ENCODE measurements at regions of chr19 and their contacts with region 1.

Region 1: GRCh38 chr19:5690125-5690954 is at the start of gene RPL36:
- DNase-seq: peak; percentile 99
- ATAC-seq: peak; percentile 19
- H3K4me3 Mint-ChIP-seq: peak within 1 kb of the TSS; percentile 99
- H3K27ac Mint-ChIP-seq: peak within 1 kb of the TSS; percentile 95
- H3K4me1 Mint-ChIP-seq: peaks cover 15% of the 10 kb centered on the region
- H3K27me3 Mint-ChIP-seq: peaks cover 5% of the 10 kb centered on the region; the same call in 1 of the 2 replicates
- CTCF ChIP-seq: peak; percentile 84
- total RNA-seq, gene RPL36: 1,080 to 1,240 TPM (median 1,178 TPM) in 3 replicates

Region 2: GRCh38 chr19:5622463-5623396 is 67.6 kb before region 1 on chr19 and contains the starts of genes SAFB and SAFB2:
- CTCF ChIA-PET with region 1: interaction called, 16 read pairs
- POLR2A ChIA-PET with region 1: interaction called, 5 read pairs
- DNase-seq: peak; percentile 100
- ATAC-seq: peak; percentile 92
- H3K4me3 Mint-ChIP-seq: peak within 1 kb of the TSS; percentile 100
- H3K27ac Mint-ChIP-seq: peak within 1 kb of the TSS; percentile 100
- H3K4me1 Mint-ChIP-seq: peaks cover 41% of the 10 kb centered on the region
- H3K27me3 Mint-ChIP-seq: peaks cover 5% of the 10 kb centered on the region
- CTCF ChIP-seq: no peak
- total RNA-seq, gene SAFB: 106 to 141 TPM (median 110 TPM) in 3 replicates
- total RNA-seq, gene SAFB2: 70.0 to 100 TPM (median 77.8 TPM) in 3 replicates

Region 3: DNA sequence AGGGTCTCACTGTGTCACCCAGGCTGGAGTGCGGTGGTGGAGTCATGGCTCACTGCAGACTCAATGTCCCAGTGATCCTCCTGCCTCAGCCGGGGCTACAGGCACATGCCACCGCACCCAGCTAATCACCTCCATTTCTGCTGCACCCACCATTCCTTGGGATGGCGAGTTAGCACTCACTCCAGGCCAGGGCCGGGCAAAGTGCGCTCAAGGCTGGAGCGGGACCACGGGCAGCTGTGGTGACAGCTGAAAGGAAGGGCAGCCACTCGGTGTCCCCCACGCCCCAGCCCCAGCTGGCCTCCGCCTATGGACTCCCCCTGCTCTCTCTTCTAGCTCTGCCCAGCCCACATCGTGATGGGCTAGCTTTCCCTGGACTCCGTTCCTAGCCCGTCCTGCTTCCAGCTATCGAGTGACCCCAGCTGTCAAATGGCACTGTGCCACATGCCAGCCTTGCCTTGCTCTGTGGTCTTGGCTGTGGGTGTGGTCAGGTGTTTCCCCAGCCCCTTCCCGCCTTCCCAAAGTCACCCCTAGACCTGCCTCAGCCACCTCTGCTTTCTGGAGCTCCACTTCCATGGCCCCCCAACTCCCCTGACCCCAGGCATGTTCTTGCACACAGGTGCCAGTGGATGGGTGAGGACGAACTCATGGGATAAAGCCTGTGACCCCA is 14.1 kb before region 1 on chr19:
- CTCF ChIA-PET with region 1: interaction called, 22 read pairs
- POLR2A ChIA-PET with region 1: interaction called, 5 read pairs
- DNase-seq: no peak
- ATAC-seq: no peak
- H3K4me3 Mint-ChIP-seq: no peak overlapping the region
- H3K27ac Mint-ChIP-seq: no peak overlapping the region
- H3K4me1 Mint-ChIP-seq: peaks cover 10% of the 10 kb centered on the region
- H3K27me3 Mint-ChIP-seq: peaks cover 4% of the 10 kb centered on the region
- CTCF ChIP-seq: no peak

Region 4: DNA sequence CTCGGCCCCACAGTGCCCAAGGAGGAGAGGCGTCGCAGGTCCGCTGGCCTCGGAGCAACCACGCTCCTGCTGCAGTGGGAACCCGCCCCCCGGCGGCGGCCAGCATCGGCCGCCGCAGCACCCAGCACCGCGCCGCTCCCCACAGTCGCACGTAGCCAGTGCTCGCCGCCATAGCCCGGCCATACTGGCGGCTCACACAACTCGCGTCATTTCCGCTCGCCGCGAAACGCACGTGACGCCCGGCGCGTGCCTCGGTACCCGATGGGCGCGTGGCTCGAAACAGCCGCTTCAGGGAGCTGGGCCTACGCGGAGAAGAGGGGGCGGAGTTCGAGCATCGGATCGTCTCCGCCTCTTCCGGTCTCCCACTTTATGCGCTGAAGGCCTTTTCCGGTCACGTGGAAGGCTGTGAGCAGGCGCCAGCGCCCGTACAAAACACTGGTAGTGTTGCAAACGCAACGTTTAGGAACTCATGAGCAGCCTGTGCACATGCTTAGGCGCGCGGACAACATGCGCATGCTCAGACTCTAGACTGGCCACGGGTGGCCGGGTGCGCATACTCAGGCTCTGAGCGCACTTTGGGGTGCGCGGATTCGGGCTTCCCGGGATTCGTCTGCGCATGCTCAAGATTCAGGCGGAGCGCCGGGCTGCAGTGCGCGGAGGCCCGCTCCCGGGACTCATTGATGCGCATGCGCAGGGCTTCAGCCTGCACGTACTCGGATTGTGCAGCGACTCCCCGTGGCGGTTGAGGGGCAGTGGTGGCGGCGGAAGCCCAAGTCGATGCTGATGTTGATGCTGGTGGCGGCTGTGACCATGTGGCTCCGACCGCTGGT is 29.8 kb after region 1 on chr19 and contains the starts of genes CATSPERD and LONP1:
- CTCF ChIA-PET with region 1: interaction called, 27 read pairs
- POLR2A ChIA-PET with region 1: interaction called, 14 read pairs
- DNase-seq: peak; percentile 98
- ATAC-seq: peak; percentile 91
- H3K4me3 Mint-ChIP-seq: peak within 1 kb of the TSS; percentile 97
- H3K27ac Mint-ChIP-seq: peak within 1 kb of the TSS; percentile 98
- H3K4me1 Mint-ChIP-seq: peaks cover 16% of the 10 kb centered on the region
- H3K27me3 Mint-ChIP-seq: peaks cover 5% of the 10 kb centered on the region
- CTCF ChIP-seq: peak; percentile 35; the same call in 1 of the 2 replicates
- total RNA-seq, gene CATSPERD: 0.50 TPM in 1 of 3 replicates, not detected in the others
- total RNA-seq, gene LONP1: 171 to 186 TPM (median 180 TPM) in 3 replicates